BJ (cell line): ENCODE measurements at regions of chr4 and their contacts with region 1.

Region 1: DNA sequence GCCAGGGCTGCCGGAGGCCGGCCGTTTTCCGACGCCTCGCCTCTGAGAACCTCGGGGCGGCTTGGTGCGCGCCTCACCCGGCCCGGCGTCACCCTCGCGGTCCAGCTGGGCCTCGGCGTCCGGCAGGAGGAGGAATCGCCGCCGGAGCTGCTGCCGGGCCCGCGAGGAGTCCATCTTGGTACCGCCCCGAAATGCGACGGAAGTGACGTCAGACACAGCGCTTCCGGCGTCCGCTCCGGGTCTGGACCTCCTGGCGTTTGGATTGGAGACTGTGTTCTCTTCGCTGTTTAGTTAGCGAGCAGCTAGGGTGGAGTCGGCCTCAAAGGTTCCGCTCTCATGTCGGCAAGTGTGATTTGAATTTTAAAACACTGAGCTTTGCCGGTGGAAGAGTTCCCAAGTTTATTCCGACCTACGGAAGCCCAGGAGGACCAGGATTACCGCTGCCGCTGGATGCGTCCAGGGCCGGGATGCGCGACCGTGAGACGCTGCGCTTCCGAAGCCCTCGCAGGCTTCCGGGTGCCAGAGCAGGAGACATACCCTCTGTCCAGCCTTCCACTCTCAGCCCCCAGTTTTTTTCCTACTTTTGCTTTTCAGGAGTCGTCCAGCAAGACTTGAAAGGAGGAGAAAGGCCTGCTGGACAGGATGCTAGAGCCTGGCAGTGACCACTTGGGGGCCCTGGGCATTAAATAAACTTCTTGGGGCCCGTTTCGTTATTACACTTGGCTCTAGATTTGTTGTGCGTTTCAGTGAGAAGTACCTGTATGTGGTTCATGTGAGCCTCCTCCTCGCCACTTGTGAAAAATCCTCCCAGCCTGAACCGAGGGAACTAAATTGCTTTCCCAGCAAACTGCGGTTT is at the start of gene TMEM128:
- DNase-seq: peak; percentile 47
- H3K4me3 ChIP-seq: peak within 1 kb of the TSS; percentile 96
- H3K27me3 ChIP-seq: no peaks in the 10 kb centered on the region
- CTCF ChIP-seq: peak; percentile 39
- polyA plus RNA-seq, gene TMEM128: 23.1 and 35.5 TPM in 2 replicates

Region 2: GRCh38 chr4:4260253-4260652 is 12.0 kb after region 1 on chr4:
- CTCF ChIA-PET with region 1: interaction called, 17 read pairs
- POLR2A ChIA-PET with region 1: interaction called, 3 read pairs
- DNase-seq: no peak
- H3K4me3 ChIP-seq: no peak overlapping the region
- H3K27me3 ChIP-seq: peaks cover 4% of the 10 kb centered on the region
- CTCF ChIP-seq: peak; percentile 50

Region 3: GRCh38 chr4:4334798-4335520 is 86.7 kb after region 1 on chr4:
- CTCF ChIA-PET with region 1: interaction called, 24 read pairs
- POLR2A ChIA-PET with region 1: interaction called, 7 read pairs
- DNase-seq: no peak
- H3K4me3 ChIP-seq: no peak overlapping the region
- H3K27me3 ChIP-seq: peaks cover 13% of the 10 kb centered on the region
- CTCF ChIP-seq: peak; percentile 89

Region 4: GRCh38 chr4:5096256-5096655 is 848.0 kb after region 1 on chr4:
- CTCF ChIA-PET with region 1: no interaction called
- POLR2A ChIA-PET with region 1: no interaction called
- DNase-seq: no peak
- H3K4me3 ChIP-seq: no peak overlapping the region
- H3K27me3 ChIP-seq: no peaks in the 10 kb centered on the region
- CTCF ChIP-seq: no peak